ENCODE measurements at regions of chr5 and their contacts with region 1.

Region 1: GRCh38 chr5:56200856-56201666 is 32.1 kb downstream of the ANKRD55 start:
- DNase-seq: peak; percentile 76
- H3K4me3 Mint-ChIP-seq: no peak overlapping the region
- H3K27ac Mint-ChIP-seq: no peak overlapping the region
- H3K4me1 Mint-ChIP-seq: peaks cover 29% of the 10 kb centered on the region
- H3K27me3 Mint-ChIP-seq: no peaks in the 10 kb centered on the region

Region 2: DNA sequence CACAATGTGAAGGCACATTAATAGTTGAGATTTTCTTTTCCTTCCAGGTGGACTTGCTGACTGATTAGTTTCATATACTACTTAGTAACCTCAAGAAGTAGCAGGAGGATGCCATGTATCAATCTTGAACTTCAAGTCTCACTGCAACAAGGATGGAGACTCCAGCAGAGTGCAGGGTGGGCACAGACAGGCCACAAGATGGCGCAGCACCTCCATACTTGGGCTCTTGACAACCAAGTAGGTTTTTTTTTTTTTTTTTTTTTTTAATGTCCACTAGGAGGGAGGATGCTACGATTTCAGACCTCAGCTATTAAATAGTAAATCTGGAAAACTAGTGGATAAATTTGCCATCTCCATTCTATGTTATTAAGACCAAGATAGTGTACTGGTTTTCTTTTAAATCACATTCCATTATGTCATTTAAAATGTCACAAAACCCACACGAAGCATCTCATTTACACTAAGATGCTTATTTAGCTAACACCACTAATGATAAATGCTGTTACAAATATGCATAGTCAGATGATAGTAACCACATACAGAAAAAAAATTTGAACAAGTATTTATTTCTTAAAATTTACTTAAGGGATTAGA is 264.9 kb before region 1 on chr5:
- CTCF ChIA-PET with region 1: interaction called, 70 read pairs
- DNase-seq: peak; percentile 85
- H3K4me3 Mint-ChIP-seq: no peak overlapping the region
- H3K27ac Mint-ChIP-seq: no peak overlapping the region
- H3K4me1 Mint-ChIP-seq: peaks cover 2% of the 10 kb centered on the region
- H3K27me3 Mint-ChIP-seq: no peaks in the 10 kb centered on the region

Region 3: GRCh38 chr5:55982957-55983381 is 218.1 kb before region 1 on chr5:
- CTCF ChIA-PET with region 1: interaction called, 110 read pairs
- DNase-seq: peak; percentile 49
- H3K4me3 Mint-ChIP-seq: peak overlapping the region; percentile 18
- H3K27ac Mint-ChIP-seq: peak overlapping the region; percentile 25
- H3K4me1 Mint-ChIP-seq: peaks cover 84% of the 10 kb centered on the region
- H3K27me3 Mint-ChIP-seq: no peaks in the 10 kb centered on the region

Region 4: DNA sequence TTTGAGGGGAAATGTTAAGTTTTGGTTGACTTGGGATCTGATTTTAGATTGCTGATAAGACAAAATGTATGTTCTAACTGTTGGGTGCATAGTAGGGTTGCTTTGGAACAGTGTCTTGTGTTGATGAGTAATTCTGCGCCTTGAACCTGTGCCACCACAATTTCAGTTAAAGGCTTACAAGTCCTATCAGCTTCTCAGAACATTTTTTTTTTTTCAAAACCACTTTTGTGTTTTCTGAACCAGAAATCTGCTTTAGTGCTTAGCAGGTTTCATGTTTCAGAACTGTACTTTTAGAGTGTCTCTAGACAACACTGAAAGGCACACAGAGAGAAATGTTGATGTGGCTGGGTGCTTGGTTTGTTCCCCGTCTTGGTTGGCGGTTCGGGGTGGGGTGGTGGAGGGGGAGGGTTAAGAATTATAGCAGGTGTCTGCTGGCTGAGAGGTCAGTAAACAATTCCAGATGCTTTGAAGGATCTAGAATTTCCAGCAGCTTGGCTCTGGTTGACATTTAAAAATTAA is 52.5 kb before region 1 on chr5:
- CTCF ChIA-PET with region 1: interaction called, 10 read pairs
- DNase-seq: peak; percentile 81
- H3K4me3 Mint-ChIP-seq: peak overlapping the region; percentile 17
- H3K27ac Mint-ChIP-seq: peak overlapping the region; percentile 94
- H3K4me1 Mint-ChIP-seq: peaks cover 81% of the 10 kb centered on the region
- H3K27me3 Mint-ChIP-seq: no peaks in the 10 kb centered on the region

Measured in activated naive CD4-positive, alpha-beta T cell treated with anti-CD3 and anti-CD28 coated beads, Interleukin-2, amount 10 ng/mL, durations not matched to agents 7 days and 5 days (primary cell).